ENCODE measurements at regions of chr3 and their contacts with region 1.

Region 1: DNA sequence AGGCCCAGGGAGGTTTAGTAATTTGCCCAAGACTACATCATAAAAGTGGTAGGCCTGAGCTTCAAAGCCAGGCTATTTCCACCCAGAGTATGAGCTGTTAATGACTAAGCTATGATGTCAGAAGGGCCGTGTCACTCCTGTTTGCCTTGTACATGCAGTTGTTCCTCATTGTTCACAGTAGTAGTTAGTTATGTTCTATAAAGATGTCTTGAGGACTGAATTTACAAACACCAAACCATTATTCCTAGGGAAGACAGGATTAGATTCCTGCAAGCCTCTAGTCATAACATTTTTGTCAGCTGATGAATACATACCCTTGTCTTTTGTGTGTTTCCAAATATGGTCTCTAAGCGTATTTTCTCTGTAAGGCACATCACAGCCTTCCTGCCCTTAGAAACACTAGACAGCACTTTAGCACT is 20.9 kb upstream of the LARS2 start:
- DNase-seq: peak; percentile 94
- ATAC-seq: peak; percentile 90
- H3K4me3 ChIP-seq: no peak overlapping the region
- H3K27ac ChIP-seq: peak overlapping the region; percentile 89
- H3K4me1 ChIP-seq: peaks cover 13% of the 10 kb centered on the region
- H3K27me3 ChIP-seq: no peaks in the 10 kb centered on the region
- CTCF ChIP-seq: no peak
- POLR2A ChIP-seq: no peak
- RAD21 ChIP-seq: no peak

Region 2: GRCh38 chr3:45253316-45253715 is 114.1 kb before region 1 on chr3:
- CTCF ChIA-PET with region 1: no interaction called
- POLR2A ChIA-PET with region 1: no interaction called
- dilution Hi-C with region 1: no loop called
- in situ Hi-C with region 1: no loop called
- intact Hi-C with region 1: loop called (anchors 2 kb)
- DNase-seq: peak; percentile 83
- ATAC-seq: peak; percentile 87
- H3K4me3 ChIP-seq: no peak overlapping the region
- H3K27ac ChIP-seq: peak overlapping the region; percentile 38; the same call in 1 of the 2 replicates
- H3K4me1 ChIP-seq: peaks cover 10% of the 10 kb centered on the region
- H3K27me3 ChIP-seq: no peaks in the 10 kb centered on the region
- CTCF ChIP-seq: no peak
- POLR2A ChIP-seq: no peak
- RAD21 ChIP-seq: no peak

Region 3: GRCh38 chr3:45269952-45270351 is 97.5 kb before region 1 on chr3:
- CTCF ChIA-PET with region 1: no interaction called
- POLR2A ChIA-PET with region 1: no interaction called
- dilution Hi-C with region 1: no loop called
- in situ Hi-C with region 1: no loop called
- intact Hi-C with region 1: no loop called
- DNase-seq: no peak
- ATAC-seq: no peak
- H3K4me3 ChIP-seq: no peak overlapping the region
- H3K27ac ChIP-seq: no peak overlapping the region
- H3K4me1 ChIP-seq: peaks cover 7% of the 10 kb centered on the region
- H3K27me3 ChIP-seq: no peaks in the 10 kb centered on the region
- CTCF ChIP-seq: no peak
- POLR2A ChIP-seq: no peak
- RAD21 ChIP-seq: no peak